Transverse colon (tissue), 4 donors: ENCODE measurements at regions of chr9 and their contacts with region 1.

Region 1: DNA sequence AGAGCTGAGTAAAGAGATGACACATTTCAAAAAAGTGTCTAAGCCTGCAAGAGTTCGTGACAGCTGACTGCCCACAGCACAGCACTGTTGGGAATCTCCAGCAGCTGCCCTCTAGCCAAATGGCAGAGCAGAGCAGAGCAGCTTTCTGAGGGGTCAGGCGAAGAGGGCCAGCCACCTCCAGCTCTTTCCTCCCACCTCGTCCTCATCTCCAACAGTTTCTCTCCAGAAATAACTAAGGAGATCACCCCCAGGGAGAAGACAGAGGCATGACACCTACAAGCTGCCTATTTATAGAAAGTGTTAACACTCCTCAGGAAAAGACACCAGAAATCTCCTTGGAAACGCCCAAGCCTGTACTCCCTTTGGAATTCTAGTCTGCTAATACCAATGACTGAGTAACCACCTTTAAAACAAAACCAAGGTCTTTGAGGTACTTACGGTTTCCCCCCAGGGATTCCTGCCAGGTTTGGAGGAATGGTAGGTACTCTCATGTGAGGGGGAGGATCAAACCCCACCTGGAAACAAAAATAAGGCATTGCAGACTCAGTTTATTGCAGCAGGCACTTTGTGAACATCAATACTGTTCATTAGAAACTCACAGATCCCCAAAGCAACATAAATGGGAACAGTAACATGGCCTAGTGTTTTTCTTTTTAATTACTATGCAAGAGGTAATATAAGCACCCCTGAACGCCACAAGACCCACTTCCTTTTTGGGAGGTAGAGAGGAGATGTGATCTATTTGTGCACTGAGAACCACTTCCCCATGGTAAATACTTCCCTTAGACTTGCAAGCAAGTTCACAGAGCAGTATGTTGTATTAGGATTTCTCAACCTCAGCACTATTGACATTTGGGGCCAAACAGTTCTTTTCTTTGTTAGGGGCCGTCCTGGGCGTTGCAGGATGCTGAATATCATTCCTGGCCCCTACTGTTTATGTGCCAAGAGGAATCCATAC is 79.3 kb downstream of the TLE1 start:
- DNase-seq: no peak
- H3K4me3 ChIP-seq: no peak overlapping the region
- H3K27ac ChIP-seq: peak overlapping the region in 2 of 4 donors; percentile 9 to 15
- H3K4me1 ChIP-seq: peaks cover 0 to 6% (median 5%) of the 10 kb centered on the region in 4 donors
- H3K27me3 ChIP-seq: no peaks in the 10 kb centered on the region
- CTCF ChIP-seq: no peak
- EP300 ChIP-seq: no peak
- POLR2A ChIP-seq: no peak

Region 2: GRCh38 chr9:79757881-79758669 is 1852.0 kb before region 1 on chr9:
- in situ Hi-C with region 1: no loop called
- intact Hi-C with region 1: loop called (anchors 10 kb)
- DNase-seq: no peak
- H3K4me3 ChIP-seq: no peak overlapping the region
- H3K27ac ChIP-seq: peak overlapping the region in 1 of 4 donors; percentile 7
- H3K4me1 ChIP-seq: no peaks in the 10 kb centered on the region
- H3K27me3 ChIP-seq: no peaks in the 10 kb centered on the region
- CTCF ChIP-seq: peak in 3 of 5 experiments; percentile 21 to 34 (median 33)
- EP300 ChIP-seq: no peak
- POLR2A ChIP-seq: no peak

Region 3: GRCh38 chr9:81389569-81389993 is 220.5 kb before region 1 on chr9:
- in situ Hi-C with region 1: loop called in 1 of 4 experiments (anchors 25 kb)
- intact Hi-C with region 1: no loop called
- DNase-seq: peak; percentile 11
- H3K4me3 ChIP-seq: no peak overlapping the region
- H3K27ac ChIP-seq: no peak overlapping the region
- H3K4me1 ChIP-seq: peaks cover 0 to 11% (median 0%) of the 10 kb centered on the region in 4 donors
- H3K27me3 ChIP-seq: no peaks in the 10 kb centered on the region
- CTCF ChIP-seq: no peak
- EP300 ChIP-seq: no peak
- POLR2A ChIP-seq: no peak

Region 4: DNA sequence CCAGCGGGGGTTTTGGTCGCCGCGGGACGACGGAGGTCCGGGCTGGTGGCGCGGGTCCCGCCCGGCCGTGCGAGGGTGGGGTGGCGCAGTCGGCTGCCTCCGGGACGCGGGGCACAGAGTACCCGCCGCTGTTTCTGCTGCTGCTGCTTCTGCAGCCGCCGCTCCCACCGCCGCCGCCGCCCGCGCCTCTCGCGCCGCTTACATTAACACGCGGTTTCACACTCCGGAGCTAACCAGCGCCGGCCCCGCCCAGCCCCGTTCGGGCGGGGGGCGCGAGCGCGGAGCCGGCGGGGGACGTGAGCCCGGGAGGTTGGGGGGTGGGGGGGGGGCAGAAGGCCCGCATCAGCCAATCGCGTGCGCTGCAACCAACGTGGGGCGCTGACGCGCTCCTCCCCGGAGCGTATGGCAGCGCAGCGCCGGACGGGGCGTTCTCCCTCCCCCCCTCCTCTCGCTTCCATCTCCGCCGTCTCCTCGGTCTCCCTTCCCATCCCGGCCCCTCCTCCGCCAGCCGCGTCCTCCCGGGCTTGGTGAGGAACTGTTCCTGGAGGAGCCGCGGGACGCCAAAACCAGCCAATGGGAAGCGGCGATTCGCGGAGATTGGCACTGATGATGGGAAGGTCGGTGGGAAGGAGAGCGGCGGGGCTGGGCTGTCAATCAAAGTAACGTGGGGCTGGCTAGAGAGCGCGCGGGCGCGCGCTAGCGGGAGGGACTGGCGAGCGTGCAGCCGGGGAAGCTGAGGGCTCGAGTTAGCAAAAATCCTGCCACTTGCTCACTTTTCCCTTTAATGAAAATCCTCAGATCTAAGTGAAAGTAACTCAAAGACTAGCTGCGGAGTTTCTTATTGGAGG is 79.5 kb after region 1 on chr9 and contains the start of gene TLE1:
- in situ Hi-C with region 1: no loop called
- intact Hi-C with region 1: loop called (anchors 5 kb)
- DNase-seq: peak; percentile 99
- H3K4me3 ChIP-seq: peak within 1 kb of the TSS; percentile 60 to 92 (median 74)
- H3K27ac ChIP-seq: peak within 1 kb of the TSS; percentile 89 to 95 (median 93)
- H3K4me1 ChIP-seq: peaks cover 11 to 34% (median 30%) of the 10 kb centered on the region in 4 donors
- H3K27me3 ChIP-seq: no peaks in the 10 kb centered on the region
- CTCF ChIP-seq: no peak
- EP300 ChIP-seq: peak; percentile 2
- POLR2A ChIP-seq: peak; percentile 77
- total RNA-seq, gene TLE1: 51.5 to 77.3 (median 62.2) TPM

Region 5: DNA sequence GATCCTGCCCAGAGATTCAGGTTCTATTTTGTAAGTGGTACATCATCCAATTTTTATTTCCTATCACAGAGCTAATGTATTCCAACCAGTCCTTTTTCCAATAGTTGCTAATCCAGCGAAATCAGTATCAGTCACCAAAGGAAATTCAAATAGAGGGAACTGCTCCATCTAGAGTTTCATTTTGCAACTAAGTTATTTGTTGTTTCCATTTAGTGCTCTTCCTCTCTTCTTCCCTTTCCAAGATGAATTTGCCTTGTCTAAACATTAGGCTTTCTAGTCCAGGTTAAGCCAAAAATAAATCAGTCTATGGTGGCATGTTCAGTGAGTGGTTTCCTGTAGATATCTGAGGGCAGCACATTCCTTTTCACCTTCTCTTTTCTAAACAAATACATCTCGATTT is 238.4 kb after region 1 on chr9:
- in situ Hi-C with region 1: loop called in 1 of 4 experiments (anchors 25 kb)
- intact Hi-C with region 1: no loop called
- DNase-seq: no peak
- H3K4me3 ChIP-seq: no peak overlapping the region
- H3K27ac ChIP-seq: no peak overlapping the region
- H3K4me1 ChIP-seq: peaks cover 0 to 16% (median 0%) of the 10 kb centered on the region in 4 donors
- H3K27me3 ChIP-seq: no peaks in the 10 kb centered on the region
- CTCF ChIP-seq: peak; percentile 23 to 42 (median 30)
- EP300 ChIP-seq: no peak
- POLR2A ChIP-seq: no peak